Natural killer cell (primary cell): ENCODE measurements at regions of chr3 and their contacts with region 1.

Region 1: GRCh38 chr3:17088602-17089313 is 204.0 kb downstream of the PLCL2 start:
- DNase-seq: peak; percentile 57 to 72
- ATAC-seq: peak; percentile 75 to 89 (median 77)
- H3K4me3 ChIP-seq: no peak overlapping the region
- H3K4me3 Mint-ChIP-seq: peak overlapping the region; percentile 87
- H3K27ac ChIP-seq: peak overlapping the region; percentile 4
- H3K27ac Mint-ChIP-seq: peak overlapping the region; percentile 65 to 80
- H3K4me1 ChIP-seq: peaks cover 25% of the 10 kb centered on the region
- H3K4me1 Mint-ChIP-seq: peaks cover 58 to 62% of the 10 kb centered on the region in 2 donors
- H3K27me3 ChIP-seq: no peaks in the 10 kb centered on the region
- H3K27me3 Mint-ChIP-seq: no peaks in the 10 kb centered on the region
- CTCF ChIP-seq: no peak

Region 2: GRCh38 chr3:16309558-16309957 is 779.2 kb before region 1 on chr3:
- intact Hi-C with region 1: loop called (anchors 10 kb)
- DNase-seq: peak in 1 of 2 donors; percentile 84
- ATAC-seq: peak; percentile 74 to 82 (median 76)
- H3K4me3 ChIP-seq: no peak overlapping the region
- H3K4me3 Mint-ChIP-seq: peak overlapping the region; percentile 62
- H3K27ac ChIP-seq: peak overlapping the region; percentile 55
- H3K27ac Mint-ChIP-seq: peak overlapping the region; percentile 82 to 86
- H3K4me1 ChIP-seq: peaks cover 57% of the 10 kb centered on the region
- H3K4me1 Mint-ChIP-seq: peaks cover 70 to 82% of the 10 kb centered on the region in 2 donors
- H3K27me3 ChIP-seq: no peaks in the 10 kb centered on the region
- H3K27me3 Mint-ChIP-seq: no peaks in the 10 kb centered on the region
- CTCF ChIP-seq: no peak

Region 3: DNA sequence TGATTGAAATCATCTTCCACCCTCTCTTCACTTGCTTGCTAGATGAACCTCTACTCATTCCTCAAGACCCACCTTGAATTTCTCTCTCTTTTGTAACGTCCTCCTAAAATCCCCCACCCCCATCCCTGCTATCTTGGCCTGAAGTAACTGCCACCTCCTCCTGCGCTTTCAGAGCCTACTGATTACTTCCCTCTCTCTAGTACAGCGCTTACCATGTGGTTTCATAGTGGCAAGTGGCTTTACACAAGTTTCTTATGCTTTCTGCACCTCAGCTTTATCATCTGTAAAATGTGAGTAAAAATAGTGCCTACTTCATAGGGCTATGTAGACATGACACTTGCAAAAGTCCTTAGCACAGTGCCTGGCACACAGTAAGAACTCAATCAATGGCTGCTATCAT is 454.8 kb before region 1 on chr3:
- intact Hi-C with region 1: no loop called
- DNase-seq: no peak
- ATAC-seq: peak; percentile 24 to 80 (median 36)
- H3K4me3 ChIP-seq: no peak overlapping the region
- H3K4me3 Mint-ChIP-seq: no peak overlapping the region
- H3K27ac ChIP-seq: no peak overlapping the region
- H3K27ac Mint-ChIP-seq: peak overlapping the region in 1 of 2 donors; percentile 44
- H3K4me1 ChIP-seq: no peaks in the 10 kb centered on the region
- H3K4me1 Mint-ChIP-seq: peaks cover 7 to 13% of the 10 kb centered on the region in 2 donors
- H3K27me3 ChIP-seq: no peaks in the 10 kb centered on the region
- H3K27me3 Mint-ChIP-seq: peaks cover 15 to 22% of the 10 kb centered on the region in 2 donors
- CTCF ChIP-seq: no peak

Region 4: DNA sequence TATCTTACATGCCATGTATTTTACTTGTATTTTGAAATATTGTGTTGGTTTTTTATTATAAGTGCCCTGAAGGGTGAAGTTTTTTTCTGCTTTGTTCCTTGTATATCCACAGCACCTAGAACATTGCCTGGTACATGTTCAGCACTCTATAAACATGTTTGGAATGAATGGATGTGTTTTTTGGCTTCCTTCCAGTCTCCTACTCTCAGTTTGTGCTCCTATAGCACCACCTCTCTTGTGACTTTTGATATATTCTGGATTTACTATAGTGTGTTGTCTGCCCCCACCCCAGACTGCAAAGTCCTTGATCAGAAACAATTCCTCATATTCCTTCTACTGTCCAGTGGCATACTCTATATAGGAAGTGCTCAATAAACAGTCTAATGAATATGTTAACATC is 143.4 kb before region 1 on chr3:
- intact Hi-C with region 1: no loop called
- DNase-seq: no peak
- ATAC-seq: no peak
- H3K4me3 ChIP-seq: no peak overlapping the region
- H3K4me3 Mint-ChIP-seq: no peak overlapping the region
- H3K27ac ChIP-seq: no peak overlapping the region
- H3K27ac Mint-ChIP-seq: peak overlapping the region; percentile 1 to 6
- H3K4me1 ChIP-seq: peaks cover 17% of the 10 kb centered on the region
- H3K4me1 Mint-ChIP-seq: peaks cover 69 to 76% of the 10 kb centered on the region in 2 donors
- H3K27me3 ChIP-seq: no peaks in the 10 kb centered on the region
- H3K27me3 Mint-ChIP-seq: no peaks in the 10 kb centered on the region
- CTCF ChIP-seq: no peak

Region 5: DNA sequence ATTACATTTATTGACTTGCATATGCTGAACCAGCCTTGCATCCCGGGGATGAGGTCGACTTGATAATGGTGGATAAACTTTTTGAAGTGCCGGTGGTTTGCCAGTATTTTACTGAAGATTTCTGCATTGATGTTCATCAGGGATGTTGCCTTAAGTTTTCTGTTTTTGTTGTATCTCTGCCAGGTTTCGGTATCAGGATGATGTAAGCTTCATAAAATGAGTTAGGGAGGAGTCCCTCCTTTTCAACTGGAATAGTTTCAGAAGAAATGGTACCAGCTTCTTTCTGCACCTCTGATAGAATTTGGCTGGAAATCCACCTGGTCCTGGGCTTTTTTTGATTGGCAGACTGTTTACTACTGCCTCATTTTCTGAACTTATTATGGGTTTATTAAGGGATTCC is 402.8 kb after region 1 on chr3:
- intact Hi-C with region 1: no loop called
- DNase-seq: no peak
- ATAC-seq: no peak
- H3K4me3 ChIP-seq: no peak overlapping the region
- H3K4me3 Mint-ChIP-seq: no peak overlapping the region
- H3K27ac ChIP-seq: no peak overlapping the region
- H3K27ac Mint-ChIP-seq: no peak overlapping the region
- H3K4me1 ChIP-seq: no peaks in the 10 kb centered on the region
- H3K4me1 Mint-ChIP-seq: peaks cover 0 to 3% of the 10 kb centered on the region in 2 donors
- H3K27me3 ChIP-seq: no peaks in the 10 kb centered on the region
- H3K27me3 Mint-ChIP-seq: no peaks in the 10 kb centered on the region
- CTCF ChIP-seq: no peak